ENCODE measurements at regions of chr19 and their contacts with region 1.

Region 1: DNA sequence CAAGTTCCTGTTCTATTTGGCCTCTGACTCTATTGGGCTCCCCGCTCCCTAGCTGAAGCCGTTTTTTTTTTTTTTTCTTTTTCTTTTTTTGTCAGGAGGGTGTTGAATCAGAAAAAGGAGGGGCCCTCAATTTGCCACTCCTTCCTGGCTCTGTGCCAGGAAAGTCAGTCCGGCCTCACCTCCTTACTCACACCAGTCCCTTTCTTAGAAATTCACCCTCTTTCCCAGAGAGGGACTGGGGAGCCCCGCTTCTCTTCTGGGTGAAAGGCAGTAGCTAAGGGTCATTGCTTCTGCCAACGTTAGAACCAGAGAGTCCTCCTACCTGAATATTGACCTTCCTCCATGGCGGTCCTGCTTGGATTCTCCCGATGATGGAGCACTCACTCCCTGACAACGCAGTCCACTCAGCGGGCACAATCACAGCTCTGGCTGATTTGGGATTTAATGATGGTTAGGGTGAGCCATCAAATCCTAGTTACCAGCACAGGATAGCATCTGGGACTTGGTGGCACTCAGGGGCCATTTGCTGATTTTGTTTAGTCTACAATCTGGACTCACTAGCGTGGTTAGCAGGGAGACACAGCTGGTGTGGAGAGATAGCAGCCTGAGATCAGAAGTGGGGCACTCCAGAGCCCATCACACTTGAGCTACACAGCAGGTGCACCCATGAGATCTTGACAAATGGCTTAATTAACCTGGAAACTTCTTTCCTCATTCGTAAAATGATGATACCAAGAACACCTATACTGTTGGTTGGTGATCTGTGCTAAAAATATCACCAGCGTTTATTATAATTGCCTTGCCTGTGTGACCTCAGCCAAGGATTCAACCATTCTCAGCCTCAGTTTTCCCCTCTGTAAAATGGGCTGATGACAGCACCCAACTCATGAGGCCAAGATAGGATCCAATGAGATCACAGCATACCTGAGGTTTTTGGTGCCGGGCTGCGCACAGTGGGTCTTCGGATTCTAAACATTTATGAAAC is 2.2 kb downstream of the FCER2 start:
- DNase-seq: peak; percentile 73
- ATAC-seq: peak; percentile 40
- H3K4me3 ChIP-seq: peak overlapping the region; percentile 100
- H3K27ac ChIP-seq: peak overlapping the region; percentile 94
- H3K4me1 ChIP-seq: peaks cover 47% of the 10 kb centered on the region
- H3K27me3 ChIP-seq: no peaks in the 10 kb centered on the region
- CTCF ChIP-seq: no peak
- EP300 ChIP-seq: peak in 1 of 2 experiments; percentile 34; a peak in 1 of 4 replicates
- POLR2A ChIP-seq: peak; percentile 55; the same call in 1 of the 2 replicates
- RAD21 ChIP-seq: no peak

Region 2: DNA sequence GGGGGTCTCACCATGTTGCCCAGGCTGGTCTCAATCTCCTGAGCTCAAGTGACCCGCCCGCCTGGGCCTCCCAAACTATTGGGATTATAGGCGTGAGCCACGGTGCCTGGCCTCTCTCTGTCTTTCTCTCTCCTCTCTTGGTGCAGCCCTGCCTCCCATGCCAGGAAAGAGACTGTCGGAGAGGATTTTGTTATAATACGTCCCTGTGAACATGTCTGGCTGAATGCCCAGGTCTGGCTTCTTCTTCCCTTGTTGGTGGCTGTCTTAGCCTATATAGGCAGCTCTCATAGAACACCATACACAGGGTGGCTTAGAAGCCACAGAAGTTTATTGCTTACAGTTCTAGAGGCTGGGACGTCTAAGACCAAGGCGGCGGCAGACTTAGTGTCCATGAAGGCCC is 257.3 kb before region 1 on chr19:
- CTCF ChIA-PET with region 1: no interaction called
- POLR2A ChIA-PET with region 1: no interaction called
- RAD21 ChIA-PET with region 1: no interaction called
- SMC1A ChIA-PET with region 1: no interaction called
- in situ Hi-C with region 1: no loop called
- intact Hi-C with region 1: no loop called
- DNase-seq: no peak
- ATAC-seq: no peak
- H3K4me3 ChIP-seq: no peak overlapping the region
- H3K27ac ChIP-seq: no peak overlapping the region
- H3K4me1 ChIP-seq: no peaks in the 10 kb centered on the region
- H3K27me3 ChIP-seq: no peaks in the 10 kb centered on the region
- CTCF ChIP-seq: no peak
- EP300 ChIP-seq: no peak
- POLR2A ChIP-seq: no peak
- RAD21 ChIP-seq: no peak

Region 3: DNA sequence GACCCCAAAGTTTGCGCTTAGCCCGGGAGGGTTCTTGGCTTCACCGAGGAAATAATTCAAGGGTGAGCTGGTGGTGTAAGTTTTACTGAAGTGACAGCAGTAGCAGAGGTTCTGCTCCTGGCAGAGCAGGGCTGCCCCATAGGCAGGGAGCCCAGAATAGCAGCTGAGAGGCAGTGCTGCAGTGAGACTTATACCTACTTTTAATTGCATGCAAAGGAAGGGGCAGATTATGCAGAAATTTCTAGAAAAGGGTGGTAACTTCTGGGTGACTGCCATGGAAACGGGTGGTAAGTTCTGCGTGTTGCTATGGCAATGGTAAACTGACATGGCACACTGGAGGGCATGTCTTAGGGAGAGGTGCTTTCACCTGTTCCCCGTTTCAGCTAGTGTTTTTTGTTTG is 121.6 kb before region 1 on chr19:
- CTCF ChIA-PET with region 1: no interaction called
- POLR2A ChIA-PET with region 1: no interaction called
- RAD21 ChIA-PET with region 1: no interaction called
- SMC1A ChIA-PET with region 1: no interaction called
- in situ Hi-C with region 1: no loop called
- intact Hi-C with region 1: no loop called
- DNase-seq: no peak
- ATAC-seq: no peak
- H3K4me3 ChIP-seq: no peak overlapping the region
- H3K27ac ChIP-seq: no peak overlapping the region
- H3K4me1 ChIP-seq: no peaks in the 10 kb centered on the region
- H3K27me3 ChIP-seq: no peaks in the 10 kb centered on the region
- CTCF ChIP-seq: no peak
- EP300 ChIP-seq: no peak
- POLR2A ChIP-seq: no peak
- RAD21 ChIP-seq: no peak

Region 4: GRCh38 chr19:7680606-7681339 is 18.9 kb before region 1 on chr19 and contains the start of gene TRAPPC5:
- CTCF ChIA-PET with region 1: interaction called, 32 read pairs
- POLR2A ChIA-PET with region 1: interaction called, 10 read pairs
- RAD21 ChIA-PET with region 1: interaction called, 19 read pairs
- SMC1A ChIA-PET with region 1: interaction called, 26 read pairs
- in situ Hi-C with region 1: no loop called
- intact Hi-C with region 1: no loop called
- DNase-seq: no peak
- ATAC-seq: peak; percentile 79
- H3K4me3 ChIP-seq: peak within 1 kb of the TSS; percentile 85
- H3K27ac ChIP-seq: peak within 1 kb of the TSS; percentile 97
- H3K4me1 ChIP-seq: peaks cover 39% of the 10 kb centered on the region
- H3K27me3 ChIP-seq: no peaks in the 10 kb centered on the region
- CTCF ChIP-seq: peak; percentile 64 to 97 (median 94); a peak in 4 of 6 replicates
- EP300 ChIP-seq: no peak
- POLR2A ChIP-seq: 0 out of 2 replicates have a peak, but pooled peaks have one; percentile 65
- RAD21 ChIP-seq: peak; percentile 75
- polyA plus RNA-seq, gene TRAPPC5: 4.2 to 22.5 TPM

Region 5: GRCh38 chr19:7743425-7743841 is 43.7 kb after region 1 on chr19:
- CTCF ChIA-PET with region 1: no interaction called
- POLR2A ChIA-PET with region 1: interaction called, 11 read pairs
- RAD21 ChIA-PET with region 1: interaction called, 11 read pairs
- SMC1A ChIA-PET with region 1: interaction called, 6 read pairs
- in situ Hi-C with region 1: no loop called
- intact Hi-C with region 1: loop called (anchors 2 kb)
- DNase-seq: peak; percentile 53
- ATAC-seq: peak; percentile 97
- H3K4me3 ChIP-seq: no peak overlapping the region
- H3K27ac ChIP-seq: no peak overlapping the region
- H3K4me1 ChIP-seq: peaks cover 30% of the 10 kb centered on the region
- H3K27me3 ChIP-seq: no peaks in the 10 kb centered on the region
- CTCF ChIP-seq: no peak
- EP300 ChIP-seq: peak; percentile 86 to 88; a peak in 3 of 4 replicates
- POLR2A ChIP-seq: no peak
- RAD21 ChIP-seq: no peak

Measured in GM12878 (cell line).